ENCODE measurements at regions of chr5 and their contacts with region 1.

Region 1: GRCh38 chr5:149828161-149828884 is 98.2 kb downstream of the PPARGC1B start:
- DNase-seq: peak; percentile 87 to 88
- ATAC-seq: peak; percentile 46 to 73 (median 69)
- H3K4me3 ChIP-seq: no peak overlapping the region
- H3K27ac ChIP-seq: peak overlapping the region in 9 of 10 donors; percentile 20 to 89 (median 79)
- H3K4me1 ChIP-seq: peaks cover 38 to 73% (median 53%) of the 10 kb centered on the region in 9 donors
- H3K27me3 ChIP-seq: no peaks in the 10 kb centered on the region
- CTCF ChIP-seq: peak; percentile 73 to 95 (median 89)

Region 2: GRCh38 chr5:149656576-149657182 is 171.6 kb before region 1 on chr5:
- intact Hi-C with region 1: loop called in 6 of 10 experiments (anchors 5 kb)
- DNase-seq: peak; percentile 54 to 56
- ATAC-seq: peak in 5 of 8 donors; percentile 26 to 63 (median 53)
- H3K4me3 ChIP-seq: no peak overlapping the region
- H3K27ac ChIP-seq: peak overlapping the region in 8 of 10 donors; percentile 12 to 91 (median 76)
- H3K4me1 ChIP-seq: peaks cover 0 to 29% (median 12%) of the 10 kb centered on the region in 9 donors
- H3K27me3 ChIP-seq: no peaks in the 10 kb centered on the region
- CTCF ChIP-seq: peak; percentile 37 to 82 (median 70)

Region 3: GRCh38 chr5:149731639-149732323 is 96.5 kb before region 1 on chr5:
- intact Hi-C with region 1: loop called in 9 of 10 experiments (anchors 2 to 10 kb)
- DNase-seq: peak; percentile 86 to 90
- ATAC-seq: peak; percentile 3 to 79 (median 70)
- H3K4me3 ChIP-seq: peak overlapping the region; percentile 74 to 99 (median 94)
- H3K27ac ChIP-seq: peak overlapping the region; percentile 68 to 96 (median 91)
- H3K4me1 ChIP-seq: peaks cover 3 to 49% (median 33%) of the 10 kb centered on the region in 9 donors
- H3K27me3 ChIP-seq: no peaks in the 10 kb centered on the region
- CTCF ChIP-seq: peak in 4 of 9 donors; percentile 16 to 36 (median 26)

Region 4: GRCh38 chr5:149765932-149766331 is 62.4 kb before region 1 on chr5:
- intact Hi-C with region 1: loop called in 5 of 10 experiments (anchors 2 to 10 kb)
- DNase-seq: no peak
- ATAC-seq: no peak
- H3K4me3 ChIP-seq: no peak overlapping the region
- H3K27ac ChIP-seq: peak overlapping the region in 4 of 10 donors; percentile 36 to 66 (median 58)
- H3K4me1 ChIP-seq: peaks cover 5 to 82% (median 48%) of the 10 kb centered on the region in 9 donors
- H3K27me3 ChIP-seq: no peaks in the 10 kb centered on the region
- CTCF ChIP-seq: peak in 8 of 9 donors; percentile 18 to 38 (median 32)

Region 5: DNA sequence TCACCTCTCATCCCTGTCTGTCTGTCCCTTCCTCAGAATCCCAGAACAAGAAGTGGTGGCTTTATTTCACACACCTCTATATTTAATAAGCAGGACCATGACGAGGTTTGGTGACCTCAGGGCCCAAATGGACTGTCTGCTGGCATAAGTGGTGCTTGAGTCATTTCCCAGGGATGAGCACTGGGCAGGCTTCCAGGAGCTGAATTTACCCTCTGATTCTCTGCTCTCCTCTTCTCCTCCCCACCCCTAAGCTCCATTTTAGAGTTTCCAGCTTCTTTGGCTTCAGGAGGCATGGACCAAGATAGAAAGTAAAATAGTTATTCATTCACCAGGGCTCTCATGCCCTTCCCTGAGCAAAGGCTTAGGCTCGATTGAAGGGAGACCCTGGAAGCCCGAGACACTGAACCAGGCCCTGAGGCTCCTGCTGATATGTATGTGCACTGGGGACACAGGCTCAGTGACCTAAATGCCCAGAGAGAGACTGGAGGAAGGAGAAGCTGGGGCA is 29.2 kb before region 1 on chr5:
- intact Hi-C with region 1: loop called in 2 of 10 experiments (anchors 2 kb)
- DNase-seq: peak in 1 of 2 donors; percentile 73
- ATAC-seq: peak in 6 of 8 donors; percentile 12 to 68 (median 38)
- H3K4me3 ChIP-seq: no peak overlapping the region
- H3K27ac ChIP-seq: peak overlapping the region in 9 of 10 donors; percentile 71 to 92 (median 88)
- H3K4me1 ChIP-seq: peaks cover 33 to 100% (median 89%) of the 10 kb centered on the region in 9 donors
- H3K27me3 ChIP-seq: no peaks in the 10 kb centered on the region
- CTCF ChIP-seq: no peak

Region 6: DNA sequence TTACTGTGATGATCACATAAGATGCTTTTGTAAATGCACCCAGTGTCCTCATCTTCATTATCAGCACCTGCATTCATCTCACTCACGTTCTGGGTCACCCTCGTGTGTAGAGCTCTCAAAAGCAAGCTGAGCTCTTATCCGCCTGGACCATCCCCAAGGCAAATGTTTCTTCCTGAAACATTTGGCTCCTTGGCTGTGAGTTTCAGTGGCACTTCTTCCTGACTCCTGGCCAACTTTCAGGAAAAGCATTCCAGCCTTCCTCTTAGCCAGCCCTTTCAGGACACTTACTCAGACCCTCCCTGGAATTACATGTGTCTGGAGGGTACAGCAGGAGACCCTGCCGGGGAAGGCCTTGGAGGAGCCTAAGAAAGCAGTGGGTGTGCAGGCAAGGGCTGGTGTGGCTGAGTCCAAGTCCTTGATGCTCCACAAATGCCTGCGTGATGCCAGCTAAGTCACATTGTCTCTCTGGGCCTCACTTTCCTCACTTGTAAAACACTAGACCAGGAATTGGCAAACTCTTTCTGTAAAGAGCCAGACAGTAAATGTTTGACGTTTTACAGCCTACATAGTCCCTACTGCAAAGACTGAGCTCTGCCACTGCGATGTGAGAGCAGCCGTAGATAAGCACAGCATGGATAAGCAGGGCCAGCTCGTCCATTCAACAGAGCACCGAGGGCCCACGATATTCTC is 44.2 kb after region 1 on chr5:
- intact Hi-C with region 1: no loop called
- DNase-seq: no peak
- ATAC-seq: peak in 6 of 8 donors; percentile 56 to 84 (median 73)
- H3K4me3 ChIP-seq: no peak overlapping the region
- H3K27ac ChIP-seq: peak overlapping the region in 1 of 10 donors; percentile 1
- H3K4me1 ChIP-seq: peaks cover 0 to 18% (median 8%) of the 10 kb centered on the region in 9 donors
- H3K27me3 ChIP-seq: no peaks in the 10 kb centered on the region
- CTCF ChIP-seq: no peak